Ovary (tissue), 10 donors: ENCODE measurements at regions of chr1 and their contacts with region 1.

Region 1: GRCh38 chr1:78607334-78607927 is 12.8 kb upstream of the IFI44L start:
- DNase-seq: no peak
- H3K4me3 ChIP-seq: no peak overlapping the region
- H3K27ac ChIP-seq: no peak overlapping the region
- H3K4me1 ChIP-seq: no peaks in the 10 kb centered on the region
- H3K27me3 ChIP-seq: no peaks in the 10 kb centered on the region
- CTCF ChIP-seq: peak; percentile 30 to 59 (median 49)
- EP300 ChIP-seq: no peak
- POLR2A ChIP-seq: no peak

Region 2: DNA sequence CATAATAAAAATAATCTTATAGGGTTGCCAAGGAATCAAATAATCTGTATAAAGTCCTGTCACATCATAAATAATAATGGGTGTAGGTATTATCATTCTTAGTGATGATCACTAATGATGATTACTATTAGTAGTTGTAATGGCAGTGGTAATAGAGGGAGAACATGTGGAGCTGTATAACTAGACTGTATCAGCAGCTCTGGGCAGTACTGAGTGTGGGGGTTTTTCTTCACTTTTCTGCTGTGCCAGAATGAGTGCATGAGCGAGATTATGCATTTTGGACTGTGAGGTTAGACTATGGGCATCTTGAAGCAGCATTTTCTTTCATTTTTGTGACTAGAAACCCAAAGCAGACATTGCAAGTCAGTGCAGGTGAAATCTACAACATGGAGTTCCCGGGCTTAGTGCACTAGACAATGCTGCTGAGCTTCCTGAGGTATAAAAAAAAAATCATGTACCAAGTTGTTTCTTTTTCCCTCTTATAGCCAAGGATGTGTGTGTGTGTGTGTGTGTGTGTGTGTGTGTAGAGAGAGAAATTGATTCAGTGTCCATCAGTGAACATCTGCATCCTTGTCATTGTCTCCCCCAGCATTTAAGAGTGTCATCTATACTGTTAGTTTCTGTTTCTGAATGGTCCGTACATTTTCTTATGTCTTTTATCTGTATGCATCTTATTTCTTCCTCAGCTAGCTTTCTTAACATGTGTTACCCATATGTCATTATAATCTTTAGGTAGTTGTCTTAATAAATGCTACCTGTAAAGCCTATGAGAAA is 475.1 kb before region 1 on chr1:
- intact Hi-C with region 1: loop called in 1 of 4 experiments (anchors 10 kb)
- DNase-seq: no peak
- H3K4me3 ChIP-seq: no peak overlapping the region
- H3K27ac ChIP-seq: no peak overlapping the region
- H3K4me1 ChIP-seq: no peaks in the 10 kb centered on the region
- H3K27me3 ChIP-seq: no peaks in the 10 kb centered on the region
- CTCF ChIP-seq: no peak
- EP300 ChIP-seq: no peak
- POLR2A ChIP-seq: no peak

Region 3: GRCh38 chr1:78145105-78145580 is 462.3 kb before region 1 on chr1:
- intact Hi-C with region 1: loop called in 3 of 4 experiments (anchors 5 to 10 kb)
- DNase-seq: peak; percentile 19 to 49 (median 33)
- H3K4me3 ChIP-seq: no peak overlapping the region
- H3K27ac ChIP-seq: no peak overlapping the region
- H3K4me1 ChIP-seq: no peaks in the 10 kb centered on the region
- H3K27me3 ChIP-seq: no peaks in the 10 kb centered on the region
- CTCF ChIP-seq: peak; percentile 52 to 57 (median 56)
- EP300 ChIP-seq: no peak
- POLR2A ChIP-seq: no peak

Region 4: DNA sequence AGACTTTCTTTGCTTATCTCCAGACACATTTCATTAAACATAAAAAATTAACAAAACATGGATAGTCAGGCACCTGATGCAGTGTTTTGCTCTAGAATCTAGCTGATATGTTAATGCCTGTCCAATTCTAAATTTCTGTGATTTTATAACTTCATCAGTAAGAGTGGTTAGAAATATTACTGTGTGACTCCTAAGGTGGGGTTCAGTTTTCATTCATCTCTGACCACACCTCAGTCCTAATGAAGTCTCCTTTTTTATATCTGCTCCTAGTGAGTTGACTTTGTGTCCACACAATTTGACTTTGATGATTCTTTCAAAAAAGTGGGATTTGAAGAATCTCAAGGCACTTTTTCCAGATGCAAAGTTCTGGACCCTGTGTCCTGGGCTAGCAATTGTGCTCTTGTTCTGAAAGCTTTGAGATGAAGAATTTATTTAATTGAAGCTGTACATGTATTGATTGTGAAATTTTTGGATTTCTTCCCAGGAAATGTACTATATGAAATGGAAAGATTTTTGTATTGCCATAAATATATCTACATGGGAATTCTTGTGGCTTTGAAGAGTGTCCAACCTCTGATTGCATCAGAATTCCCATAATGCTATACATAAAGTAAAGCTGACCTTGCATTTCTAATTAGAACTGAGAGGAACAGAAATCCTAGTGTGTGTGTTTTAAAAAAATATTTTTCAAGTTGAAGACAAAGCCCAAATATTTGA is 450.5 kb before region 1 on chr1:
- intact Hi-C with region 1: loop called in 1 of 4 experiments (anchors 10 kb)
- DNase-seq: no peak
- H3K4me3 ChIP-seq: no peak overlapping the region
- H3K27ac ChIP-seq: no peak overlapping the region
- H3K4me1 ChIP-seq: no peaks in the 10 kb centered on the region
- H3K27me3 ChIP-seq: no peaks in the 10 kb centered on the region
- CTCF ChIP-seq: no peak
- EP300 ChIP-seq: no peak
- POLR2A ChIP-seq: no peak

Region 5: GRCh38 chr1:78797108-78797781 is 189.8 kb after region 1 on chr1:
- intact Hi-C with region 1: no loop called
- DNase-seq: no peak
- H3K4me3 ChIP-seq: no peak overlapping the region
- H3K27ac ChIP-seq: no peak overlapping the region
- H3K4me1 ChIP-seq: no peaks in the 10 kb centered on the region
- H3K27me3 ChIP-seq: no peaks in the 10 kb centered on the region
- CTCF ChIP-seq: no peak
- EP300 ChIP-seq: no peak
- POLR2A ChIP-seq: no peak

Region 6: DNA sequence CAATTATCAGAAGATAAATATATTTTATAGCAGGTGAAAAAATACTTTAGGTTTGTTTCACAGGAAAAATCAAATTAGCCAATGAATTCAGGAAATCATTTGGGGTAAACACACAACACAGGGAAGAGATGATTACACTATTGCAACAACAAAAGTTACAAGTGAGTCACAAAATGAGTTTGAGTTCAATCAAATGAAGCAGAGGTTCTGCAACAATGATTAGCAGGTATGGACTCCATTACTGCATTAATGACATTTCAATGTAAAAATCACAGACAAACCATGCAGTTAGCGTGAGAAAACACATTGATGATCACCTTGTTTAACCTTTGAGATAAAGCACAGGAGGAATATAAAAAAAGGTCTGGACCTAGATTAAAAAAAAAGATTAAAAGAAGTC is 389.4 kb after region 1 on chr1:
- intact Hi-C with region 1: no loop called
- DNase-seq: no peak
- H3K4me3 ChIP-seq: no peak overlapping the region
- H3K27ac ChIP-seq: no peak overlapping the region
- H3K4me1 ChIP-seq: no peaks in the 10 kb centered on the region
- H3K27me3 ChIP-seq: no peaks in the 10 kb centered on the region
- CTCF ChIP-seq: no peak
- EP300 ChIP-seq: no peak
- POLR2A ChIP-seq: no peak

Region 7: GRCh38 chr1:79079770-79080169 is 472.3 kb after region 1 on chr1:
- intact Hi-C with region 1: no loop called
- DNase-seq: no peak
- H3K4me3 ChIP-seq: no peak overlapping the region
- H3K27ac ChIP-seq: no peak overlapping the region
- H3K4me1 ChIP-seq: no peaks in the 10 kb centered on the region
- H3K27me3 ChIP-seq: no peaks in the 10 kb centered on the region
- CTCF ChIP-seq: no peak
- EP300 ChIP-seq: no peak
- POLR2A ChIP-seq: no peak